Activated CD4-positive, alpha-beta T cell treated with anti-CD3 and anti-CD28 coated beads for 36 hours (primary cell): ENCODE measurements at regions of chr18 and their contacts with region 1.

Region 1: DNA sequence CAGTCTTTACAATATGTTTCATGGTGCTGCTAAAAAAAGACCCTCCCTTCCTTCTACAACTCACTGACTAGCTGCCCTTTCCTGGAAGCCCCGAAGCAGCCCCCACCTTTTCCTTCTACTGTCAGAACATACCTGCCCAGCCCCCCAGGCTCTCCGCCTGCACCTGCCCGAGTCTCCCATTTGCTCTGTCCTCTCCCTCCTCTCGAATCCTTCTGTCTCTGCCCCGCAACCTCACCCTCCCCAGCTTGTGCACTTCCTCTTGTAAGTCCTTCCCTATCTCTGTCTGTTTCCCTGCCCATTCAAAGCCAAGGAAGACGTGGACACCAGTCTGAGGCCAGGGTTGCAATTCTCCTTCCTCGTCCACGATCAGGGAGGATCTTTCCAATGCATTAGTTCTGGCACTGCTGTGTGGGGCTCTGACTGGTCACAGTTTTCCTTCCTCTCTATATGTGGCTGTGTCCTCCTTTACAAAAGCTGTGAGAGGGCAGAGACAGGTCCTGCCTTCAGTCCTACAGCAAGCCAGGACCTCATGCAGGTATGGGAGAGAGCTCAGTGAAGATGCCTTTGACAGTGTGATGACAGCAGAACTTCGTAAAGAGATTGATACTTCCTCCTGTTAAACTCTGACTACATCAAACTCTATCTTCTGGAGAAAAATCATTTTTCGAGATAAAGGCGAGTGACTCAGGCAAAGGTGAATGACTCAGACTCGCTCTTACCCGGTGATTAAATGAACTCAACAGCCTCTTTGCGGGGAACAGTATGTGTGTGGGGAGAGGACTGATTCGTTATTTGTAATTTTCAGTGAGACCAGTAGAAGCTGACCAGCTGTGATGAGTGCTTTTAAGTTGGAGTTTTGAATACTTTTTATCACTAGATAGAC is 14.2 kb downstream of the TNFRSF11A start:
- DNase-seq: peak; percentile 56
- ATAC-seq: peak; percentile 98
- H3K4me3 Mint-ChIP-seq: peak overlapping the region; percentile 7
- H3K27ac Mint-ChIP-seq: peak overlapping the region; percentile 72
- H3K4me1 Mint-ChIP-seq: peaks cover 24% of the 10 kb centered on the region
- H3K27me3 Mint-ChIP-seq: peaks cover 19% of the 10 kb centered on the region

Region 2: GRCh38 chr18:62324917-62325805 is 14.2 kb before region 1 on chr18 and contains the start of gene TNFRSF11A:
- CTCF ChIA-PET with region 1: interaction called, 11 read pairs
- POLR2A ChIA-PET with region 1: no interaction called
- intact Hi-C with region 1: loop called in 1 of 2 experiments (anchors 1 kb)
- DNase-seq: peak; percentile 85
- ATAC-seq: peak; percentile 77
- H3K4me3 Mint-ChIP-seq: peak within 1 kb of the TSS; percentile 78
- H3K27ac Mint-ChIP-seq: peak within 1 kb of the TSS; percentile 64
- H3K4me1 Mint-ChIP-seq: peaks cover 29% of the 10 kb centered on the region
- H3K27me3 Mint-ChIP-seq: peaks cover 70% of the 10 kb centered on the region
- total RNA-seq, gene TNFRSF11A: 6.9 to 9.3 TPM

Region 3: GRCh38 chr18:62938487-62938886 is 599.1 kb after region 1 on chr18:
- CTCF ChIA-PET with region 1: no interaction called
- POLR2A ChIA-PET with region 1: no interaction called
- intact Hi-C with region 1: no loop called
- DNase-seq: no peak
- ATAC-seq: no peak
- H3K4me3 Mint-ChIP-seq: no peak overlapping the region
- H3K27ac Mint-ChIP-seq: no peak overlapping the region
- H3K4me1 Mint-ChIP-seq: peaks cover 10% of the 10 kb centered on the region
- H3K27me3 Mint-ChIP-seq: no peaks in the 10 kb centered on the region